Dorsolateral prefrontal cortex (tissue), 120 donors: ENCODE measurements at regions of chr7 and their contacts with region 1.

Region 1: DNA sequence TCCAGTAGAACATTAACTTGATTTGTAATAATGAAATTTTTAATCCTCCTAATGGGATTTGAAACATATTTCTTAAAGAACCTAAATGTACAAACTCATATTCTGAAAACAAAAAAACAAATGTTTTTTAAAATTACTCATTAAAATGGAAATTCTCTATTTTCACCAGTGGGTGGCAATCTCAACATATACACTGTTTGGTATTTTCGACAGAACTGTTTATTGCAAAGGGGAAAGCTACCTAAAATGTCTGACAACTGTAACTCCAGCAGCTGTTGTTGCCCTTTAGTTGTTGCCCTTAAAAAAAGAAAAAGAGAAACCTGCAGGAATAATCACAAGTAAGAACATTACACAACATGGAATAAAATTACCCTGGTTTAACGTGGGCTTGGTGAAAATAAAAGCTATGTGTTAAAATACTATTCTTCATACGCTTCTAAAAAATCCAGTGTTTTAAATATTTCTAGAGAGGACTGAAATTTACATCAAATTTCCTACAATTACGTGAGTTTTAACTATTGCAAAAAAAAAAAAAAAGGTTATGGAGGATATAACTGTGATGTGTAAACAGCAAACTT is 54.5 kb downstream of the COL1A2 start:
- DNase-seq: no peak
- H3K4me3 ChIP-seq: peak overlapping the region in 7 of 59 donors; percentile 2 to 38 (median 19)
- H3K27ac ChIP-seq: peak overlapping the region in 1 of 59 donors; percentile 30
- H3K27me3 ChIP-seq: no peaks in the 10 kb centered on the region
- CTCF ChIP-seq: peak; percentile 52 to 92 (median 76)

Region 2: DNA sequence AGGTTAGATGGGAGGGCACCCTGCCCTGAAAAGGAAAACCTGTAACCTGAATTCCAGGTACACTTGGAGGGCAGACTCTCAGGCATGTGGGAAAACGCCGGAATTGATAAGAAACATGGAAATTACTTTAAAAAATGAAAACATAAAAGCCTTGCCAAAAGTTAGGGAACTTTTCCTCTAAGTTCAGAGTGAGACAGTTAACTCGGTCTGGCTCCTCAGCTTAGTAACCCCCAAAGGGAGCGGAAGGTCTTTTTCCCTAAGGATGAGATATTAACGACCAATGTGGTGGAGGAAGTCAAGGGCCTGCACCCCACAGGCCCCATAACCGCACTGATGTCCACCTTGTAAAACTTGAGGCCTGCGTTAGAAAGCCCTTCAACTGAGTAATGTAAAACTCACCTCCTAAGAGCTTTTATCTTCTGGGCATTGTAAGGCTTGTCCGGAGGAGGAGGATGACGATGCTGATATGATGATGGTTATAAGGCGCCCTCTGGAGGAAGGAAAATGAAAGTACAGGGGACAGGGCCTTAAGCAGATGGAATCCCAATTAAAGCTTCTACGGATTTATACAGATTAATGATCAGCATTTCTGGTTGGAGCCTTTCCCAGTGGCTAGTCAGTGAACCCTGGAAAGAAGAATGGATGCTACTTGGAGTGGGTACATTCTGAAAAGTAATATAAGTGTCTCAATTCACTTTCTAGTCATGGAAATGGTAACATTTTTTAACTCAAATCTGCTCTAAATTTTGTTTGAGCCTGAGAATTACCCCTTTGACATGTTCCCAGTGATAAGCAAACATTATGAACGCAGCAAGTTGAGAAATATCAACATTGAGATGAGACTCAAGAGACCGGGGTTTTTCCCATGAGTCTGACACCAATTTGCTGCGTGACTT is 53.8 kb before region 1 on chr7:
- intact Hi-C with region 1: no loop called
- DNase-seq: no peak
- H3K4me3 ChIP-seq: peak overlapping the region in 57 of 59 donors; percentile 5 to 66 (median 42)
- H3K27ac ChIP-seq: peak overlapping the region in 37 of 59 donors; percentile 2 to 77 (median 40)
- H3K27me3 ChIP-seq: peaks cover 0 to 23% (median 5%) of the 10 kb centered on the region in 45 donors
- CTCF ChIP-seq: peak; percentile 44 to 81 (median 68)

Region 3: GRCh38 chr7:94410413-94411187 is 38.6 kb before region 1 on chr7:
- intact Hi-C with region 1: no loop called
- DNase-seq: no peak
- H3K4me3 ChIP-seq: no peak overlapping the region
- H3K27ac ChIP-seq: no peak overlapping the region
- H3K27me3 ChIP-seq: no peaks in the 10 kb centered on the region
- CTCF ChIP-seq: no peak

Region 4: DNA sequence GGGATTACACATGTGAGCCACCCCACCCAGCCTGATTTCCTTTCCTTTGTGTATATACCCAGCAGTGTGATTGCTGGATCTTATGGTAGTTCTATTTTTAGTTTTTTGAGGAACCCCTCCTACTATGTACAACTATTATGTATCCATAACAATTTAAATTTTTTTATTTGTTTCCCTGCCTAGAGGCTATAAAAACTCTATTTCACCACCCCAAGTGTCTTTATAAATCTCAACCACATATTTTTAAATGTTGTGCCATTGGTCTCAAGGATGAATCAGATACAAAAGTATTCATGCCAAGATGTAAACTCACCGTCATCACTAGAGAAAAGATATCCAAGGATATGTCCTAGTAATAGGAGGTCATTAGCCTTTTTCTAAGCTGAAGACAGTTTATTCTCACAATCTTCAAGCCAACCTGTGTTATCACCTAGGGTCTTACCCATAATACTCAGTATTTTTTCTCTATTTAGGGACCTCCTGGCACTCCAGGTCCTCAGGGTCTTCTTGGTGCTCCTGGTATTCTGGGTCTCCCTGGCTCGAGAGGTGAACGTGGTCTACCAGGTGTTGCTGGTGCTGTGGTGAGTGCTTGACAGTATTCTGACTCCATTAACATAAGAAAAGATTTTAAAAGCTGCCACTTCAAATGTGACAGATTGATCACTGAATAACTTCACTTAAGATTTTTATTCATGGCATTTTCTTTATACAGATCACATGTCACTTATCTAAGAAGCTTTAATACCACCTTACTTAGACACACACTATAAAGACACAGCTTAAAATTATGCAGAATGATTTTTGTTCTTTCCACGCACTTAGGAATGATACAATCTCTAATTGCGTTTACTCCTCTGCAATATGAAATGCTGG is 25.1 kb before region 1 on chr7:
- intact Hi-C with region 1: no loop called
- DNase-seq: no peak
- H3K4me3 ChIP-seq: no peak overlapping the region
- H3K27ac ChIP-seq: no peak overlapping the region
- H3K27me3 ChIP-seq: no peaks in the 10 kb centered on the region
- CTCF ChIP-seq: no peak

Region 5: DNA sequence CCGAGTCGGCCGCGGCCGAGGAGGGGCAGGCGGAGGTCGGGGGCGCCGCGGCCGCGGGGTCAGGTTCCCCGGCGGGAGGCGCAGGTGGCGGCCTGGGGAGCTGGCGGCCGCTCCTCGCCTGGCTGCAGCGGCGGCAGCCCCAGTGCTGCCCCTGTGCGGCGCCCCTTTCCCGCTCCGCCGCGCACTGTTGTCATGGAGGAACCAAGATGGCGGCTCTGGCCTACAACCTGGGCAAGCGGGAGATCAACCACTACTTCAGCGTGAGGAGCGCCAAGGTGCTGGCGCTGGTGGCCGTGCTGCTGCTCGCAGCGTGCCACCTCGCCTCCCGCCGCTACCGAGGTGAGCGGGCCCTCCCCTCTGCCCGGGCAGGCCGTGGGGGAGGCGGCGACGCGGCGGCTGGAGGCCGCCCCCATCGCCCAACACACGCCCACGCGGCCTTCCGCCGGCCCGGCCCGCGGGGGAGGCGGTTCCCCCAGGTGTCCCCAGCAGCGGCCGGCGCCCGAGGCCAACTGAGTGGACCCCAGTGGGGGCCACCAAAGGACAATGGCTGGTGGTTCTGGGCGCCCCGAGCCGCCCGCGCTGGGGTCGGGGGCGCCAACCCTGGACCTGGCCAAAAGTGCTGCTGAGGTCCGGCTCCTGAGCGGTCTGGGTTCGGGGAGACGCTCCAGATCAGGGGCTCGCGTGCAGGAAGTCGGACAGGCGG is 60.8 kb after region 1 on chr7:
- intact Hi-C with region 1: loop called in 1 of 2 experiments (anchors 10 kb)
- DNase-seq: peak; percentile 51 to 80 (median 62)
- H3K4me3 ChIP-seq: peak overlapping the region; percentile 66 to 97 (median 88)
- H3K27ac ChIP-seq: peak overlapping the region; percentile 84 to 99 (median 96)
- H3K27me3 ChIP-seq: no peaks in the 10 kb centered on the region
- CTCF ChIP-seq: peak in 44 of 56 donors; percentile 7 to 65 (median 33)

Region 6: DNA sequence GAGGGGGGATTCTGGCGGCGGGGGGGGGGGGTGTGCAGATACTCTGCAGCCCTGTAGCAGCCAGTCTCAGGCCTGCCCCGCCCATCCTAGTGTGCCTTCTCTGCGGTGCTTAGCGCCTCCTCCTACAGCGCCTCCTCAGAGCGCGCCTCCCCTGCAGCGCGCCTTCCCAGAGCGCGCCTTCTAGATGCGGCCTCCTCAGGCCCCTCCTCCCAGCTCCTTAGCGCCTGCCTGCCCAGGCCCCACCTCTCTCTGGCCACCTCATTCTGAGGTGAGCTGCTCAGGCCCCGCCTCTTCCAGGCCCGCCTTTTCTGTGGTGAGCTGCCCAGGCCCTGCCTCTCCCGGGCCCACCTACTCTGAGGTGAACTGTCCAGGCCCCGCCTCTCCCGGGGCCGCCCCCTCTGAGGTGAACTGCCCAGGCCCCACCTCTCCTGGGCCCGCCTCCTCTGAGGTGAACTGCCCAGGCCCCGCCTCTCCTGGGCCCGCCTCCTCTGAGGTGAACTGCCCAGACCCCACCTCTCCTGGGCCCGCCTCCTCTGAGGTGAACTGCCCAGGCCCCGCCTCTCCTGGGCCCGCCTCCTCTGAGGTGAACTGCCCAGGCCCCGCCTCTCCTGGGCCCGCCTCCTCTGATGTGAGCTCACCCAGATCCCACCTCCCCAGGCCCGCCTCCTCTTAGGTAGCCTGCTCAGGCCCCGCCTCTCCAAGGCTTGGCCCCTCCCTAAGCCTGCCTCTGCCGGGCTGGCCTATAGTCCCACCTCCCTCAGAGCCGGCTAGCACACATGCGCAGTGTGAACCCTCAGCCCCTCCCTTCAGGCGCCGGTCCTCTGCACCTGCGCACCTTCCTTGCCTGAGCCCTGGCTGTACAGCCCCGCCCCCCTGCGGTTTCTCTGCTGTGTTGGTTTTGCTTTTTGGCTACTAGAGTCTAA is 208.8 kb after region 1 on chr7:
- intact Hi-C with region 1: loop called in 1 of 2 experiments (anchors 5 kb)
- DNase-seq: peak; percentile 69 to 96 (median 93)
- H3K4me3 ChIP-seq: peak overlapping the region; percentile 54 to 92 (median 78)
- H3K27ac ChIP-seq: peak overlapping the region in 53 of 59 donors; percentile 20 to 96 (median 73)
- H3K27me3 ChIP-seq: no peaks in the 10 kb centered on the region
- CTCF ChIP-seq: peak in 8 of 56 donors; percentile 6 to 29 (median 10)

Region 7: DNA sequence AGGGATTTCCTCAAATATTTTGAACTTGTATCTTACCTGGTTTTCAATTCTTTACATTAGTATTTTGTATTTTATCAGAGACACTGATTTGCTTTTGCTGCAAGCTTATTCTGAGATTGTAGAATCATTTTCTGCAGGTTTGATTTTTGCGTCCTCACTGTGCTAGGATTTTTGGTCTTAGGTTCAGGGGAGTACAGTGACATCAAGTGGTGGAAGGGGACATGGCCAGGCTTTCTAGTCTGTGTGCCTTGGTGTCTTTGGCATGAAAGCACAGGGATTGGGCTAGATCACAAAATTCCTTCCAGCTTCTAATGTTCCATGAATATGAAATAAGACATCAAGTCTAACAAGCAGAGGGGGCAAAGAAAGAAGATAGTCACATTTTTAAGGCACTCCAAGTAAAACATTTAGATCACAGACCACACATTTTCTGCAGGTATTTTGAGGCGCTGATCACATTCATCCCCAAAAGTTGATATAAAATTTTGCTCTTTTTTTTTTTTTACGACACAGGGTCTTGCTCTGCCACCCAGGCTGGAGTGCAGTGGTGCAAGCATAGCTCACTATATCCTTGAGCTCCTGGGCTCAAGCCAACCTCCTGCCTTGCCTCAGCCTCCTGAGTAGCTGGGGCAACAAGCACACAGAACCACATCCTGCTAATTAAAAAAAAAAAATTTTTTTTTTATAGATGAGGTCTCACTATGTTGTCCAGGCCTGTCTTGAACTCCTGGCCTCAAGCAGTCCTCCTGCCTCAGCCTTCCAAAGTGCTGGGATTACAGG is 750.7 kb after region 1 on chr7:
- intact Hi-C with region 1: loop called in 1 of 2 experiments (anchors 5 kb)
- DNase-seq: peak in 9 of 10 donors; percentile 43 to 80 (median 52)
- H3K4me3 ChIP-seq: no peak overlapping the region
- H3K27ac ChIP-seq: peak overlapping the region in 29 of 59 donors; percentile 1 to 67 (median 36)
- H3K27me3 ChIP-seq: no peaks in the 10 kb centered on the region
- CTCF ChIP-seq: peak; percentile 28 to 89 (median 78)

Region 8: GRCh38 chr7:95476904-95477594 is 1027.8 kb after region 1 on chr7:
- intact Hi-C with region 1: loop called (anchors 5 to 10 kb)
- DNase-seq: peak in 9 of 10 donors; percentile 23 to 86 (median 58)
- H3K4me3 ChIP-seq: peak overlapping the region in 22 of 59 donors; percentile 1 to 61 (median 16)
- H3K27ac ChIP-seq: peak overlapping the region in 4 of 59 donors; percentile 3 to 21 (median 20)
- H3K27me3 ChIP-seq: no peaks in the 10 kb centered on the region
- CTCF ChIP-seq: peak; percentile 77 to 99 (median 90)